Posterior cingulate gyrus (tissue), 11 donors: ENCODE measurements at regions of chr16 and their contacts with region 1.

Region 1: GRCh38 chr16:11255737-11256660 is at the start of gene SOCS1:
- DNase-seq: peak; percentile 63 to 97 (median 72)

Region 2: DNA sequence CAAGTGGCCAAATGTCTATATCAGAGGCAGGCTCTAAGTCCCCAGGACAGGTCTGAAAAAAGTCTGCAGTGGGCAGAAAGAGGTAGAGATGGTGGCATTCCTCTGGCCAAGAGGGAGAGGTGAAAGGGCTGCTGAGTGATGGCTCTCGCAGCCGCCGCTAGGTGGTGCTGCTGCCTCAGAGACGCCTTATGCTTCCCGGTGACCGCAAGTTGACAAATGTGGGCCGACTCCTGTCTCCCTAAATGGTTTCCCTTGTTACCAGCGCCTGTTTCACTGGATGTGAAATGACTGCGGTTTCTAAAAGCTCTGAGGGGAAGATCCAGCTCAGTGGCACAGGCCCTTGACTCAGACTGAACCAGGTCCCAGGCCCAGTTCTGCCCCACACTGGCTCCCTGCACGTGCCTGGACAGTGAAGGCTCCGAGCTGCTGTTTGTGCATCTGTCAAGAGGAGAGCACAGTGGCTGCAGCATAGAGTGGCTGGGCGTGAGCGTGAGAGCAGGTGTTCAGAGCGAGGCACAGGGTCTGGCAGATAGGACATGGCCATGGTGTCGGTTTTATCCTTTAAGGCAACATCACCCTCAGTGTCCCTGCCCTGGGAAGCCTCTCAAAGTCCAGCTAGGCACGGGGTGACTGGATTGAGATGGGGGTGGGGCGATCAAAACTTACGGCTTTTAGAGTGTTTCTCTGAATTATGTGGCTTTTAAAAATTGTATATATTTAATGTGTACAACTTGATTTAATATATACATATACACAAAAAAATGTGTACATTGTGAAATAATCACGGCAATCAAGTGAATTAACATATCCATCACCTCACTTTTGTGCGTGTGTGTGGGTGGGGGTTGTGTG is 291.7 kb before region 1 on chr16:
- intact Hi-C with region 1: loop called (anchors 2 kb)
- DNase-seq: peak; percentile 63 to 97 (median 87)

Region 3: GRCh38 chr16:10971560-10971961 is 284.4 kb before region 1 on chr16:
- intact Hi-C with region 1: loop called (anchors 2 kb)
- DNase-seq: peak in 3 of 10 donors; percentile 25 to 34 (median 30)

Region 4: DNA sequence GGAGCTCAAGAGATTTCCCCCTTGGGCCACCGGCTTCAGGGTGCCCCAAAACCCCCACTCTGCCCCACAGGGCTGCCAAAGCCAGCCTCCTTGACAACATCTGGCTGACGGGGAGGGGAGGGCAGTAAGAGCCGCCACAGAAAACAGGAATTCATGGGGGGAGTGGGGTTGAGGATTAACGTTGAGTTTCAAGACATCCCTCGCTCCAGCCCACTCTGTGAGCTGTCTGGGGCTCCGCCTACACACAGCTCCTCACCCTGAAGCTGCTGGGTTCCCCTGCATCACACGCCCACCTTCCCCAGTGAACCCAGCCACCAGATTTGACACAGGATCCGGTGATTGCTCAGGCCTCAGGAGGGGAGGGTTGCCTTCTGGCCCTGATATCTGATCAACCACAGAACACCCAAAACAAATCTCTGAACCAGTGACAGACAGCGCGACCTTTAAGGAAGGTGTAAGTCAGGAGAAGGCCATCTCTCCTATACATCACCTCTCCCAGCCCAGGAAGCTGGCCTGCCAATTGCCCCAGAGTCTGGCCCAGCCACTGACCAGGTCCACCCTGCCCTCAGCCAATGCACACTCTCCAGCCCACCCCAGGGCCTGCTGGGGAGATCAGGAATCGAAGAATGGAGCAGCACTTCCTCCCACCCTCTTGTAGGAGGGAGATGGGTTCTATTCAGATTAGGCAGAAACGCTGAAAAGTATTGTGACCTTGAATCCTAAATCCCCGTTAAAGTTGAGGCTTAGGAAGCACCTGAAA is 179.6 kb before region 1 on chr16:
- intact Hi-C with region 1: no loop called
- DNase-seq: peak in 1 of 10 donors; percentile 70

Region 5: GRCh38 chr16:11233727-11234376 is 22.1 kb before region 1 on chr16:
- intact Hi-C with region 1: no loop called
- DNase-seq: peak in 1 of 10 donors; percentile 17